ENCODE measurements at regions of chr11 and their contacts with region 1.

Region 1: GRCh38 chr11:111454561-111455192 is 57.5 kb downstream of the BTG4 start:
- DNase-seq: peak; percentile 59 to 92 (median 80)

Region 2: GRCh38 chr11:111540114-111540936 is 85.6 kb after region 1 on chr11 and contains the start of gene LAYN:
- intact Hi-C with region 1: loop called (anchors 10 kb)
- DNase-seq: peak; percentile 44 to 91 (median 77)

Region 3: DNA sequence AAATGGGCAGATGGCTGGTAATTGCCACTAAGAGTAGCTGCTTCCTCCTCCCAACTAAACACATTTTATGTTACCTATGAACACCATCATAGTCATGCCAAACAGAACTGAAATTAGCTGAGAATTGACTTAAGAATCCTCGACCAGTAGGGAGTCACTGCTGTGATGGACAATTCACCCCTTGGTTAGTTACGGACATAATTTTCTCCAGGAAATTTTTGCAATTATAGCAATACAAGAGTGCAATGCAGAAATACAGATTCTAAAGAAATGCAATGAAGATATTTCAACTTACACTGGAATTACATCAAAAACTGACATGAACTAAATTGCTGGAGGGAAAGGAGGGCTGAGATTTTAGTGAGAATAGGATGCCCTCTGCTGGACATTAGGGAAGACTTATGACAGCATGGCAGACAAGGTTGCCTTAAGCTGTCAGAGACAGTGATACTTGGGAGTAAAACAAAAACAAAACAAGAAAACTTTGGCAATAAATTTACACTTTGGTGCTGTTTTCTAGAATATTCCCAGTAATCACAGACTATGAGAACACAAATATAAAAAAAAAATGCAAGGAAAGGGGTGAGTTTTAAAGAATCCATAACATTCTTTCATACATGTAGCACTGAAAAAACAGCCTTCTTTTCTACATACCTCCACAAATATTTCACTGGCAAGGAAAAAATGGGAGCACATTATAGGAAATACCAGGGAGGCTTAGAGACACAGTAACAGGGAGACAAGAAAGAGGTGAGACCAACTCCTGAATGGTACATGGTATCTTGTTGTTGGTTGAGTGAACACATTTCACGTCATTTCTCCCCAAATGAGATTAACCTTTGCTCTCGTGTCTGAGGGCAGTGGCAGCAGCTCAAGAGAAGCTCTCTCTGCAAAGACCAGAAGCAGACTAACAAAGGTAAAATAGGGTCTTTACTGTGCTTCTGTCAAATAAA is 322.7 kb after region 1 on chr11:
- intact Hi-C with region 1: loop called (anchors 10 kb)
- DNase-seq: peak in 23 of 42 donors; percentile 26 to 81 (median 51)